Activated T-helper 2 cell treated with anti-CD3 and anti-CD28 coated beads, Interferon-gamma antibody, Interleukin-2, Interleukin-4, amounts not matched to agents 10 μg/mL and 5 μg/mL and 100 μg/mL, durations not matched to agents 14 hours and 24 hours and 36 hours (primary cell): ENCODE measurements at regions of chr1 and their contacts with region 1.

Region 1: GRCh38 chr1:198620951-198621824 is 17.7 kb upstream of the PTPRC start:
- DNase-seq: peak; percentile 76
- H3K4me3 Mint-ChIP-seq: peak overlapping the region; percentile 82
- H3K27ac Mint-ChIP-seq: peak overlapping the region; percentile 98
- H3K4me1 Mint-ChIP-seq: peaks cover 71% of the 10 kb centered on the region
- H3K27me3 Mint-ChIP-seq: no peaks in the 10 kb centered on the region

Region 2: GRCh38 chr1:198167436-198167934 is 453.7 kb before region 1 on chr1:
- intact Hi-C with region 1: loop called (anchors 5 kb)
- DNase-seq: no peak
- H3K4me3 Mint-ChIP-seq: peak overlapping the region; percentile 48
- H3K27ac Mint-ChIP-seq: peak overlapping the region; percentile 89
- H3K4me1 Mint-ChIP-seq: peaks cover 70% of the 10 kb centered on the region
- H3K27me3 Mint-ChIP-seq: no peaks in the 10 kb centered on the region

Region 3: DNA sequence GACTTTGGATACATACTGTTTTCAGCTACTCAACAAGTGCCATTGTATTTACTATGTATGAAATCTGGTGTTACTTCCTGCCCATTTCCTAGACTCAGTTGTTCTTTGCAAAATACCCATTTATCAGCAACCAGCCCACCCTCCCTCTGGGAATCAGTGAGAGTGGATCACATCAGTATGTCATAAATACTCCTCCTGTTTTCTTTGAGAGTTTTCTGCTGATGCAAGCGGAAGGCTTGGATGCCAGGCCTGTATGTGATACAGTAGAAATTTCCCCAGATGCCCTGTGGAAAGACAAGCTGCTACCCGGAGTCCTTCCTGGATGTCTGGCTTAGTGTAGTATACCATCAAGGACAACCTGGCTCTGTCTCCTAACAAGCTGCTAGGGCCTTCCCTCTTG is 15.2 kb after region 1 on chr1:
- intact Hi-C with region 1: loop called (anchors 1 kb)
- DNase-seq: no peak
- H3K4me3 Mint-ChIP-seq: peak overlapping the region; percentile 67
- H3K27ac Mint-ChIP-seq: peak overlapping the region; percentile 76
- H3K4me1 Mint-ChIP-seq: peaks cover 65% of the 10 kb centered on the region
- H3K27me3 Mint-ChIP-seq: no peaks in the 10 kb centered on the region

Region 4: GRCh38 chr1:198657550-198658064 is 36.4 kb after region 1 on chr1:
- intact Hi-C with region 1: loop called (anchors 2 kb)
- DNase-seq: no peak
- H3K4me3 Mint-ChIP-seq: peak overlapping the region; percentile 78
- H3K27ac Mint-ChIP-seq: peak overlapping the region; percentile 95
- H3K4me1 Mint-ChIP-seq: peaks cover 55% of the 10 kb centered on the region
- H3K27me3 Mint-ChIP-seq: no peaks in the 10 kb centered on the region